ENCODE measurements at regions of chr11 and their contacts with region 1.

Region 1: GRCh38 chr11:10792398-10792975 is 16.2 kb downstream of the EIF4G2 start:
- DNase-seq: peak; percentile 85 to 86
- ATAC-seq: peak; percentile 83 to 94
- H3K4me3 ChIP-seq: no peak overlapping the region
- H3K27ac ChIP-seq: peak overlapping the region; percentile 16 to 68; a peak in 4 of 6 replicates
- H3K4me1 ChIP-seq: peaks cover 16% of the 10 kb centered on the region
- CTCF ChIP-seq: peak; percentile 90
- EP300 ChIP-seq: no peak
- POLR2A ChIP-seq: no peak
- RAD21 ChIP-seq: peak; percentile 97 to 98

Region 2: GRCh38 chr11:10122326-10123197 is 669.9 kb before region 1 on chr11:
- CTCF ChIA-PET with region 1: no interaction called
- POLR2A ChIA-PET with region 1: no interaction called
- DNase-seq: peak; percentile 23 to 31
- ATAC-seq: peak; percentile 83 to 85; a peak in 5 of 6 replicates
- H3K4me3 ChIP-seq: no peak overlapping the region
- H3K27ac ChIP-seq: peak overlapping the region; percentile 49 to 51; a peak in 3 of 6 replicates
- H3K4me1 ChIP-seq: peaks cover 44% of the 10 kb centered on the region
- CTCF ChIP-seq: no peak
- EP300 ChIP-seq: no peak
- POLR2A ChIP-seq: no peak
- RAD21 ChIP-seq: no peak

Region 3: GRCh38 chr11:10641177-10641911 is 151.1 kb before region 1 on chr11:
- CTCF ChIA-PET with region 1: no interaction called
- POLR2A ChIA-PET with region 1: no interaction called
- DNase-seq: no peak
- ATAC-seq: no peak
- H3K4me3 ChIP-seq: no peak overlapping the region
- H3K27ac ChIP-seq: no peak overlapping the region
- H3K4me1 ChIP-seq: 0 out of 3 replicates have a peak, but pooled peaks cover 3% of the 10 kb centered on the region
- CTCF ChIP-seq: no peak
- EP300 ChIP-seq: no peak
- POLR2A ChIP-seq: no peak
- RAD21 ChIP-seq: no peak

Region 4: DNA sequence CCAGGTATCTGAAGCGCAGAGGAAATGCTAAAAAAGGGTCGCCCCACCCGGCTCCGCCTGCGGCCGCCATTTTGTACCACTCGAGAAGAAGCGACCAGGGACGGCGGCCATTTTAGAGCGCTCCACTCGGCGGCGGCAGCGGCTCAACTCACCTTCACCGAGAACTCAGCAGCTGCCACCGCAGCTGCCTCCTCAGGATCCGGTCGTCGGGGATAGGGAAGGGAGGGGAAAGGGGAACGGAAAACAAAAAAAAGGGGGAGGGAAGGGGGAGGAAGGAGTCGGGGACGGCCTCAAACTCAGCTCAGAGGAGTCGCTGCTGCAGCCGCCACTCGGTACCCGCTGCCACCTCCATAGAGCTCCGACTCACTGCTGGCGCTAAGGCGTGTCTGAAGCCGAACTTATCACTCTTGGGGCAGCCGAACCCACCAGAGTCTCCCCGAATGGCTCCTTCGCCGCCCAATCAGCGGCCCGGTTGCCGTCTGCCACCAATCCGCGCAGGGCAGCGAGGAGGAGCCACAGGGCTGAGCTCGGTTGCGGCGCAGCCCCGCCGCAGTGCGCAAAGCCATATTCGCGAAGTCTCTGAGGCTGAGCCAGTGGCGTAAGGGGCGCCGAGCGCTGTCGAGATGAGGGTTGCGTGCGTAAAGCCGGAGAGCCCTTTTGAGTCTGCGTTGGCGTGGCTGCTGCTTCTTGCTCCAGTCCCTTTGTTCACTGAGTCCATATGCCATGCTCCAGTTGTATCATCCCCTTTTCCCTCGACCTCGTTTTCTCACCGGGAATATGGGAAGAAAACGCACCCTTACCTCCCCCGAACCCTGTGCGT is 16.3 kb after region 1 on chr11 and contains the start of gene EIF4G2:
- CTCF ChIA-PET with region 1: interaction called, 59 read pairs
- POLR2A ChIA-PET with region 1: interaction called, 43 read pairs
- DNase-seq: peak; percentile 98 to 99
- ATAC-seq: peak; percentile 96 to 98
- H3K4me3 ChIP-seq: peak within 1 kb of the TSS; percentile 97
- H3K27ac ChIP-seq: peak within 1 kb of the TSS; percentile 95 to 99
- H3K4me1 ChIP-seq: peaks cover 43% of the 10 kb centered on the region
- CTCF ChIP-seq: no peak
- EP300 ChIP-seq: peak in 1 of 2 experiments; percentile 17; a peak in 1 of 5 replicates
- POLR2A ChIP-seq: peak; percentile 98
- RAD21 ChIP-seq: peak in 1 of 2 experiments; percentile 12; a peak in 2 of 5 replicates
- polyA plus RNA-seq, gene EIF4G2: 1,171 and 1,351 TPM in 2 replicates

Region 5: GRCh38 chr11:10878408-10879214 is 86.1 kb after region 1 on chr11:
- CTCF ChIA-PET with region 1: interaction called, 15 read pairs
- POLR2A ChIA-PET with region 1: no interaction called
- DNase-seq: peak; percentile 31 to 81
- ATAC-seq: peak; percentile 66 to 80; a peak in 5 of 6 replicates
- H3K4me3 ChIP-seq: no peak overlapping the region
- H3K27ac ChIP-seq: peak overlapping the region; percentile 59 to 78
- H3K4me1 ChIP-seq: peaks cover 45% of the 10 kb centered on the region
- CTCF ChIP-seq: peak; percentile 55
- EP300 ChIP-seq: no peak
- POLR2A ChIP-seq: no peak
- RAD21 ChIP-seq: peak; percentile 32 to 48; a peak in 2 of 5 replicates

Region 6: GRCh38 chr11:10906513-10906912 is 114.0 kb after region 1 on chr11:
- CTCF ChIA-PET with region 1: interaction called, 25 read pairs
- POLR2A ChIA-PET with region 1: no interaction called
- DNase-seq: peak in 1 of 2 experiments; percentile 61
- ATAC-seq: peak; percentile 45 to 73; a peak in 4 of 6 replicates
- H3K4me3 ChIP-seq: no peak overlapping the region
- H3K27ac ChIP-seq: peak overlapping the region in 1 of 2 experiments; percentile 60; a peak in 3 of 6 replicates
- H3K4me1 ChIP-seq: peaks cover 28% of the 10 kb centered on the region
- CTCF ChIP-seq: peak; percentile 24; the same call in 1 of the 3 replicates
- EP300 ChIP-seq: no peak
- POLR2A ChIP-seq: no peak
- RAD21 ChIP-seq: peak; percentile 50 to 52; a peak in 4 of 5 replicates

Region 7: DNA sequence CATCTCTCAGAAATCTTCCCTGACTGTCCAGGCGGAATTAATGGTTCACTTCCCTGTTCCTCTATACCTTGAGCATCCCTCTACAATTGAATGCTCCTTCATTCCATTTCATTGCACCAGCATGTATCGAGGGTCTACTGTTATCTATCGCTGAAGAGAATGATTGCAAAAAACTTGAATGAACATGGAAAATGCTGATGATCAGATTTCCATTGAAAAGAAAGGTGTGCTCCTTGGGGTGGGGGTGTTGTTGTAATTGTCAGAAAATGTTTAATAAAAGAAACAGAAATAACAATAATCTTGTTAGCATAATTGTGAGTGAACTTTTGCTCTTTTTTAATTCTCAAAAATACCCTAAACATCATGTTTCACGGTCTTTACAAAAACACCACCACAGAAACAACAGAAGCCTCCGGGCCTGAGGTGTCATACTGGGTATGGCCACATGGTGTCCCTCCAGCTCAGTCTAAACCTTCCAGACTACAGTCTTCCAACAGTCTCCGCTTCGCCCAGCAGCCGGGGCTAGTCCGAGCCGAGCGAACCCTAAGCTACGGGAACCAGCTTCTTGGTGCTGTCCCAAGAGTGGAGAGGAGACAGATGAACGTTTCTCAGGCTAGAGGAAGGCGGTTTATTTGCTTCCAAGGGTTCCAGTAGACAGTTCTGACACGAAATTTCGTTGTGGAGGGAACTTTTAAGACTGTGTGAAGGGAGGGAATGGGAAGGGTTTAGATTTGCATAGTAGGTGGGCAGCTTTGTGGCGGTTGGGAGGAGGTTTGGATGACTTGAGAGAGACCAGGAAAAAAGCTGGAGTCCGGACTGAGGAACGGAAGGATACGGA is 141.2 kb after region 1 on chr11:
- CTCF ChIA-PET with region 1: interaction called, 78 read pairs
- POLR2A ChIA-PET with region 1: interaction called, 9 read pairs
- DNase-seq: peak; percentile 90 to 93
- ATAC-seq: peak; percentile 75 to 86
- H3K4me3 ChIP-seq: peak overlapping the region; percentile 45
- H3K27ac ChIP-seq: peak overlapping the region; percentile 98
- H3K4me1 ChIP-seq: peaks cover 40% of the 10 kb centered on the region
- CTCF ChIP-seq: peak; percentile 97
- EP300 ChIP-seq: no peak
- POLR2A ChIP-seq: peak; percentile 18; the same call in 1 of the 2 replicates
- RAD21 ChIP-seq: peak; percentile 97 to 99

Region 8: DNA sequence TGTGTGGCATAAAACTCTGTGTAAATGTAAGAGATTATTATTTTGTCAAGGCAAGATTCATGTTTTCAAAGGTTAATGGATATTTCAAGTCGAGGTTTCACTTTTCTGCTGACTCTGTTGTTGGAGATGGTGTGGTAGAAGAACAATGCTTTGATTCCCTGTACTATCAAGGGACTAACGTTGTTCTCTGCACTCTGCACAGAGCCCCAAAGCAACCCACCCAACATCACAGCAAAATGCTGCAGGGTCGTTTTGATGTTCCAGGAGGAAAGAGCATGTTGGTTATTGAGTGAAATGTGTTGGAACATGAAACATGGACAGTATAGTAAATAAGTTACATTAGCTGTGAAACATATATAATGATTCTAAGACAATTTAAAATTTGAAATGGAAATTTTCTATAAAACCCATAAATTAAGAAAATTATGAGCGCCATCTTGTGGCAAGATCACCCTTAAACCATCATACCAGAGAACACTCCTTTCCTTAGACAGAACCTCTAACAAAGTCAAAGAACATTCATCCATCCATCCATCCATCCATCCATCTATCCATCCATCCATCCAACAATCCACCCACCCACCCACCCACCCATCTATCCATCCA is 229.7 kb after region 1 on chr11:
- CTCF ChIA-PET with region 1: interaction called, 42 read pairs
- POLR2A ChIA-PET with region 1: no interaction called
- DNase-seq: peak; percentile 16 to 55
- ATAC-seq: peak; percentile 48 to 77; a peak in 3 of 6 replicates
- H3K4me3 ChIP-seq: no peak overlapping the region
- H3K27ac ChIP-seq: peak overlapping the region; percentile 18 to 20; a peak in 2 of 6 replicates
- H3K4me1 ChIP-seq: peaks cover 9% of the 10 kb centered on the region
- CTCF ChIP-seq: peak; percentile 76
- EP300 ChIP-seq: no peak
- POLR2A ChIP-seq: no peak
- RAD21 ChIP-seq: peak; percentile 78 to 86

Measured in A549 (cell line).